SK-N-SH (cell line): ENCODE measurements at regions of chr5 and their contacts with region 1.

Region 1: GRCh38 chr5:111550279-111551020 is 38.1 kb upstream of the STARD4 start:
- DNase-seq: peak; percentile 58
- H3K4me3 ChIP-seq: no peak overlapping the region; a peak in 1 of 4 replicates
- H3K27ac ChIP-seq: peak overlapping the region; percentile 60 to 66
- H3K4me1 ChIP-seq: peaks cover 11 to 14% of the 10 kb centered on the region in 2 experiments; a peak in 3 of 4 replicates
- H3K27me3 ChIP-seq: no peaks in the 10 kb centered on the region
- CTCF ChIP-seq: peak; percentile 76
- EP300 ChIP-seq: no peak; a peak in 1 of 4 replicates
- RAD21 ChIP-seq: peak; percentile 90

Region 2: DNA sequence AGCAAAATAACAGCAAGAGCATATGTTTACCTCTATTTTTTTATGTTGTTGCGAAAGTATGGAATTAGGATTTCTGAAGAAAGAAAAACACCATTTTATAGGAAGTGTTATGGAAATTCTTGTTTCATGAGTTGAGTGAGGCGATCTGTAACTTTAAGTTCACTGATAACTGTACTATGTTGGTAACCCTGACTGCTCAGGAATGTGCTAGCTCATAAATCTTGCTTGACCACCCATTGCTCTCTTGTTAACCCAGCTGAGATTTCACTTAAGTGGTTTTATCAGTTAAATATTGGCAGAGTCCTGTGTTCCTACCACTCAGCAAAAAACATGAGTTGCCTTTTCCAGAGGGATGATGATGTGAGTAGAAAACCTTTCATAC is 53.0 kb after region 1 on chr5:
- CTCF ChIA-PET with region 1: no interaction called
- POLR2A ChIA-PET with region 1: no interaction called
- DNase-seq: no peak
- H3K4me3 ChIP-seq: no peak overlapping the region
- H3K27ac ChIP-seq: no peak overlapping the region
- H3K4me1 ChIP-seq: no peaks in the 10 kb centered on the region
- H3K27me3 ChIP-seq: no peaks in the 10 kb centered on the region
- CTCF ChIP-seq: no peak
- EP300 ChIP-seq: no peak
- RAD21 ChIP-seq: no peak

Region 3: DNA sequence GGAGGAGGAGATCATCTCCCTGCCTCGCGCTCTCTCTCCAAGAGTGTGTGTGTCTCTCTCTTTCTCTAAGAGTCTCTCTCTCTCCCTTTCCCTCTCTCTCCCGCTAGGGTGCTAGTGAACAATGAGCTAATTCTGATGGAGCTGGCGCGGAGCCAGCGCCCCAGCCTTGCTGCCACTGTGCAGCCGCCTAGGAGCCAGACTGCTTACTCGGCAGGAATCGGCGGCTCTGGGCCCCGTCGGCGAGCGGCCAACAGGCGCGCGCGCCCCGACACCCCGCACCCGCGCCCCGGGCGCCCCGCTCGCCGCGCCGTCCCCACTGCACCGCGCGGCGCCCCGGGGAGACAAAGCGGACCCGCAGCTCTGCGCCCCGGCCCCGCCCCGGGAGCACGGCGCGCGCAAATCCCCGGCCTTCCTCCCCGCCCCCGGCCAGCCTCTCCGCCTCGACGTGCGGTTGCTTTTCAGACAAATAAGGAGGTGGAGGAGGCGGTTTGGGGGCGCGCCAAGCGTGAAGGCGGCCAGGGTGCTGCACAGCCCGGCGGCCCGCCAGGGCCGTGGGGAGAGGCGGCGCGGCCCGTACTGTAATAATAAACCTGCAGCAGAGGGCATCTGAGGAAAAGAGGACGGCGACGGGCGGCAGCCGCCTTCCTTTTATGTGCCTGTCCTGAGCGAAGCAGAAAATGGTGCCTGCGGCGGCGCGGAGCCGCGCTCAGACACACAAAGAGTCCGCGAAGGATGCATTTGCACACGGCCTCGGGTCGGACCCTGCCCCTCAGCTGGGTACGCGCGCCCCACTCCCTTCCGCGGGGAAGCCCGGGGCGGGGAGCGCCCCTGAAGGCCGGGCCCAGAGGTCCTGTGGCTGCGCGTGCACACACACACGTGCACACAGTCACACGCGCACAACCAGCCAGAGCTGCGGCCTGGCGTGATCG is 207.2 kb after region 1 on chr5:
- CTCF ChIA-PET with region 1: interaction called, 16 read pairs
- POLR2A ChIA-PET with region 1: interaction called, 4 read pairs
- DNase-seq: peak; percentile 91
- H3K4me3 ChIP-seq: peak overlapping the region; percentile 87 to 92
- H3K27ac ChIP-seq: peak overlapping the region; percentile 98 to 99
- H3K4me1 ChIP-seq: peaks cover 10 to 13% of the 10 kb centered on the region in 2 experiments; a peak in 3 of 4 replicates
- H3K27me3 ChIP-seq: no peaks in the 10 kb centered on the region
- CTCF ChIP-seq: peak; percentile 55
- EP300 ChIP-seq: peak in 1 of 2 experiments; percentile 17; a peak in 1 of 4 replicates
- RAD21 ChIP-seq: peak; percentile 34

Region 4: GRCh38 chr5:111863801-111864200 is 313.4 kb after region 1 on chr5:
- CTCF ChIA-PET with region 1: no interaction called
- POLR2A ChIA-PET with region 1: no interaction called
- DNase-seq: no peak
- H3K4me3 ChIP-seq: no peak overlapping the region
- H3K27ac ChIP-seq: no peak overlapping the region
- H3K4me1 ChIP-seq: no peaks in the 10 kb centered on the region; a peak in 1 of 4 replicates
- H3K27me3 ChIP-seq: no peaks in the 10 kb centered on the region
- CTCF ChIP-seq: no peak
- EP300 ChIP-seq: no peak
- RAD21 ChIP-seq: no peak

Region 5: DNA sequence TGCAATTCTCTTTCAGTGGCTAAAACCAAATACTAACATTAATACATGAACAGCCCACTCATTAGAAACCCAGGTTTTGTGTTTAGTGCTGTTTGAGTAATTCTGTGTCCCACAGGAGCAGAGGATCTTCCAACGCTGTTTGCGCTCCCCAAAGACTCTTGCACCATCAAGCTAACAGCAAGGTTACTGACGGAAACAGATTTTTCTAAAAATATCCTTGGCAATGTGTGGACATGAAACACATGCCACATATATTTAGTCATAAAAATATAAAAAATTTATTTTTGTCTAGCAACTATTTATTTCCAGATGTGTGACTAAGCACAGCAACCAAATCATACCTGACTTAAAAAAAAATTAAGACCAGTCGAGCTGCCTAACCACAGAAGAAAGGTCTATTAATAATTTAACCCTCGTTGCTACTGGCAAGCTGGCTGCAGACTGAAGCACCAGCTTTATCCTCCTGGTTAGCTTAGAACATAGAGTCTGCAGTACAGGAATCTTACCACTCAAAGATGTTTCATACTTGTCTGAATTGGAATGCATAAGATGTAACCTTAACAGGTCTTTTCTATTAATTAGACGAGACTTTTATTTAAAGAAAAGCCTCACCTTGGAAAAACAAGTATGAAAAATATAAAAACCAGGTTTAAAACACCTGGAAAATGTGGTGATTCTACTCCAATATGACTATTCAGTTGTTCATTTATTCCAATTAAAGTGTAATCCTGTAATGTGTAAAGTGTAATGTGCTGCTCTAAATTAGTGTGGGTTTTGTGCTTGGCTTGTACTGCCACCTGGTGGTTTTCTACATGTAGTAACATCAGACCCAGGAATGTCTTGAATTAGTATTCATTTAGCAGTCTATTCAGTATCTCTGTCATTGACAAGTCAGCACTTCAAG is 596.1 kb after region 1 on chr5:
- CTCF ChIA-PET with region 1: interaction called, 24 read pairs
- POLR2A ChIA-PET with region 1: no interaction called
- DNase-seq: peak; percentile 46
- H3K4me3 ChIP-seq: no peak overlapping the region; a peak in 1 of 4 replicates
- H3K27ac ChIP-seq: peak overlapping the region; percentile 71 to 72
- H3K4me1 ChIP-seq: peaks cover 0 to 3% of the 10 kb centered on the region in 2 experiments; a peak in 2 of 4 replicates
- H3K27me3 ChIP-seq: no peaks in the 10 kb centered on the region
- CTCF ChIP-seq: peak; percentile 87
- EP300 ChIP-seq: 0 out of 4 replicates have a peak, but pooled peaks of 1 of the 2 experiments have one; percentile 18
- RAD21 ChIP-seq: peak; percentile 99